ENCODE measurements at regions of chr12 and their contacts with region 1.

Region 1: GRCh38 chr12:102061560-102062418 is at the start of gene WASHC3:
- DNase-seq: peak; percentile 89
- ATAC-seq: peak; percentile 95
- H3K4me3 Mint-ChIP-seq: peak within 1 kb of the TSS; percentile 98
- H3K27ac Mint-ChIP-seq: peak within 1 kb of the TSS; percentile 97
- H3K4me1 Mint-ChIP-seq: peaks cover 21% of the 10 kb centered on the region
- H3K27me3 Mint-ChIP-seq: no peaks in the 10 kb centered on the region
- CTCF ChIP-seq: no peak
- total RNA-seq, gene WASHC3: 47.3 and 50.6 TPM in 2 replicates

Region 2: DNA sequence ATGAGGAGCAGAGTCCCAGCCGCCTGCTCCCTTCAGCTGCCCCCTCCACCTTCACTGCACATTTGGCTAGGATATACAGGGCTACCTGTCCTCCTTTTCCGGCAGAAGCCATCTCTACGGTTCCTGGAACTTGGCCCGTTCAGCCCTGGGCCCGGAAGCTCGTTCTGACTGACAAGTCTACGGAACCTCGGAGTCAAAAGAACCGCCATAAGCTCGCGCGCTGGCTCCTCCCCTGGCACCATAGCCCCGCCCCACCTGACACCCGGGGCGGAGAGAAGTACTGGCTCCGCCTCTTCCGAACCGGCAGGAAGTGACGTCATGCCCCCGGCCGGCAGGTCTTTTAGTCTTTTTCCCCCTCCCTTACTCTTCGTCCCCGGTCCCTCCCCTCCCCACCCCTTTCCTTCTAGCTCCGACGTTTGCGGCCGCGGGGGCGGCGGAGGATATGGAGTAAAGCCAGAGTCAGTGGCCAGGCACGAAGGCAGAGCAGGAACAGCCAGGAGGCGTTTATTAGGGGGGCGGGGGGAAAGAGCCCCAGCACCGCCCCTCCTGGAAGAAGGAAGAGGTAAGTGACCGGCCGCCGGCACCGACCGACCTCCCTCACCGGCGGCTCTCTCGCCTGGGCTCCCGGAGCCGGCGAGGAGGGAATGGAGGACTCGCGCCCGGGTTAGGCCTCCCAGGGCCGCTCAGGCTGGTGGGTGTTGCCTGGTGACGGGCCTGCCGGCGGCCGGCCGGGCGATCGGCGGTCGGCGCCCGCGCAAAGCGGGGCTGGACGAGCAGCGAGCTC is 1794.8 kb before region 1 on chr12 and contains the starts of genes DEPDC4 and SCYL2:
- CTCF ChIA-PET with region 1: no interaction called
- POLR2A ChIA-PET with region 1: no interaction called
- intact Hi-C with region 1: loop called (anchors 2 kb)
- DNase-seq: peak; percentile 90
- ATAC-seq: peak; percentile 93
- H3K4me3 Mint-ChIP-seq: peak within 1 kb of the TSS; percentile 99
- H3K27ac Mint-ChIP-seq: peak within 1 kb of the TSS; percentile 95
- H3K4me1 Mint-ChIP-seq: peaks cover 34% of the 10 kb centered on the region
- H3K27me3 Mint-ChIP-seq: no peaks in the 10 kb centered on the region
- CTCF ChIP-seq: no peak
- total RNA-seq, gene DEPDC4: 0.49 and 0.81 TPM in 2 replicates
- total RNA-seq, gene SCYL2: 34.7 and 38.7 TPM in 2 replicates

Region 3: DNA sequence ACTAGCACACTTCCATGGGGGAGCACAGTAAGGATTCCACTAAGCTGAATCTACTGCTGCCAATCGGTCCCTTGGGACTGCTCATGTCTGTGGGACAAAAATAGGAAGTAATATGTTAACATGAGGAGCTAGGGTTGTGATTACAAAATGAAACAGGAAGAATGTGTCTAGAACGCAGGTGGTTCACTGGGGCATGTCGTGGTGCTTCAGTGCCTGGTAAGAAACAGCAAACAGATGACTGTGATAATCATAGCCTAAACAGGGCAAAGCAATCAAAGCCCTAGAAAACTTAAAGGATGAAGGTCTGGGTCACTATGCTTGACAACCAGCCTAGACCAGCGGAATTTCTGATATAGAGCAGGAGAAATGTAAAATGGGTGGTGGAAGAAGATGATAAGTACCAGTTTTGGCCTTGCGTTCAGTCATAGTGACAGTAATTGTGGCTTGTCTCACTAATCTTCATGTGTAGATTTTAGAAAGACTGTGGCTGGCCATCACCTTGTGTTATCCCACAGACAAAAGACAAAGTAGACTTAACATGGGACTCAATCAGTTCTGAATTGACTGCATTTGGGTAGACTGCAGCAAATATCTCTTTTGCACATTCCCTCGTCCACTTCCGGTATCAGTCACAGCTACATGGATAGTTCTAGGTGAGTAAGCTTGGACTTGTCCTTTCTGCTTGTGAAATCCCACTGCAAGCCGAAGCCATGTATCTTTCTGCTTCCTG is 51.4 kb before region 1 on chr12:
- CTCF ChIA-PET with region 1: no interaction called
- POLR2A ChIA-PET with region 1: interaction called, 9 read pairs
- intact Hi-C with region 1: loop called (anchors 1 kb)
- DNase-seq: peak; percentile 23
- ATAC-seq: peak; percentile 96
- H3K4me3 Mint-ChIP-seq: peak overlapping the region; percentile 63
- H3K27ac Mint-ChIP-seq: peak overlapping the region; percentile 96
- H3K4me1 Mint-ChIP-seq: peaks cover 33% of the 10 kb centered on the region
- H3K27me3 Mint-ChIP-seq: no peaks in the 10 kb centered on the region
- CTCF ChIP-seq: no peak

Region 4: GRCh38 chr12:102119674-102120563 is 58.1 kb after region 1 on chr12 and contains the starts of genes NUP37 and PARPBP:
- CTCF ChIA-PET with region 1: no interaction called
- POLR2A ChIA-PET with region 1: interaction called, 16 read pairs
- intact Hi-C with region 1: loop called (anchors 1 kb)
- DNase-seq: peak; percentile 90
- ATAC-seq: peak; percentile 98
- H3K4me3 Mint-ChIP-seq: peak within 1 kb of the TSS; percentile 95
- H3K27ac Mint-ChIP-seq: peak within 1 kb of the TSS; percentile 91
- H3K4me1 Mint-ChIP-seq: peaks cover 12% of the 10 kb centered on the region
- H3K27me3 Mint-ChIP-seq: no peaks in the 10 kb centered on the region
- CTCF ChIP-seq: no peak
- total RNA-seq, gene NUP37: 27.0 and 29.9 TPM in 2 replicates
- total RNA-seq, gene PARPBP: 4.6 and 5.0 TPM in 2 replicates

Region 5: DNA sequence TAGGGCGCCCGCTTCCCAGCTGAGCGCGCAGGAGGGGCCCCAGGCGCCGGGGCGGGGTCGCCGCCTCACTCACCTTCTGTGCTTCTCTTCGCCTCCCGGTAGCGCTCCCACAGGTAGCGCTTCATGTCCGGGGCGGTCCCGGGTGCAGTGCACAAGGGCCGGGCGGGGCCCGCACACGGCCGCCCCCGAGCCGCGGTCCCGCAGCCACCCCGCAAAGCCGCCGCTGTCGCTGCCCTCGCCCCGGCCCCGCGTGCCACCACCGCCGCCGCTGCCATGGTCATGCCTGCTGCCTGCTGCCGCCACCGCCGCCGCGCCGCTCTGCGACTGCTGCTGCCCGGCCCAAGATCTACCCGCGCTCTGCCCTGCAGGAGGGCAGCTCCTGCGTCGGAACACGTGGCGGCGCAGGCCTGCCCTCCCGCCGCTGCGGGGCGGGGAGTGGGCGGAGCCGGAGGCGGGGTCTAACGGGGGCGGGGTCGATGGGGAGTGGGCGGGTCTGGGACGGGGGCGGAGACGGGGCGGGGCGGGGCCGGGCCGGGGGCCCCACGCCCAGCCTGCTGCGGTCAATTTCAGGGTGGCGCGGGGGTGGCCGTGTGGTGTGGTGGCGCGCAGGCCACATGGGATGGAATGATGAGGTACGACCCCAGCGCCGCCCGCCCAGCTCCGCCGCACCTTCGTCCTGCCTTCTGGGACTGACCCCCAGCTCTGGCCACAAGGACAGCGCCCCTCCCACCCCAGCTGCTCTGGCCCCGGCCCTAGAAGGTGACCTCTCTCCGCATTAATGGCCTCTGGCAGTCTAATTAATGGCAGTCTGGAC is 1779.3 kb after region 1 on chr12 and contains the start of gene NT5DC3:
- CTCF ChIA-PET with region 1: no interaction called
- POLR2A ChIA-PET with region 1: no interaction called
- intact Hi-C with region 1: loop called (anchors 5 kb)
- DNase-seq: peak; percentile 83
- ATAC-seq: peak; percentile 91
- H3K4me3 Mint-ChIP-seq: peak within 1 kb of the TSS; percentile 89
- H3K27ac Mint-ChIP-seq: peak within 1 kb of the TSS; percentile 84
- H3K4me1 Mint-ChIP-seq: peaks cover 32% of the 10 kb centered on the region
- H3K27me3 Mint-ChIP-seq: no peaks in the 10 kb centered on the region
- CTCF ChIP-seq: no peak
- total RNA-seq, gene NT5DC3: 11.6 and 12.4 TPM in 2 replicates

Measured in activated B cell treated with CpG ODN at 0.5 μM for 24 hours (primary cell).